Natural killer cell (primary cell): ENCODE measurements at regions of chr5 and their contacts with region 1.

Region 1: GRCh38 chr5:177311723-177312648 is at the start of gene MXD3:
- DNase-seq: peak; percentile 90 to 95
- ATAC-seq: peak; percentile 91 to 93 (median 92)
- H3K4me3 ChIP-seq: peak within 1 kb of the TSS; percentile 51
- H3K4me3 Mint-ChIP-seq: peak within 1 kb of the TSS; percentile 91
- H3K27ac ChIP-seq: no peak within 1 kb of the TSS
- H3K27ac Mint-ChIP-seq: peak within 1 kb of the TSS; percentile 68 to 87
- H3K4me1 ChIP-seq: peaks cover 61% of the 10 kb centered on the region
- H3K4me1 Mint-ChIP-seq: peaks cover 30 to 40% of the 10 kb centered on the region in 2 donors
- H3K27me3 ChIP-seq: no peaks in the 10 kb centered on the region
- H3K27me3 Mint-ChIP-seq: no peaks in the 10 kb centered on the region
- CTCF ChIP-seq: no peak
- total RNA-seq, gene MXD3: 10.9 to 15.0 (median 15.0) TPM

Region 2: DNA sequence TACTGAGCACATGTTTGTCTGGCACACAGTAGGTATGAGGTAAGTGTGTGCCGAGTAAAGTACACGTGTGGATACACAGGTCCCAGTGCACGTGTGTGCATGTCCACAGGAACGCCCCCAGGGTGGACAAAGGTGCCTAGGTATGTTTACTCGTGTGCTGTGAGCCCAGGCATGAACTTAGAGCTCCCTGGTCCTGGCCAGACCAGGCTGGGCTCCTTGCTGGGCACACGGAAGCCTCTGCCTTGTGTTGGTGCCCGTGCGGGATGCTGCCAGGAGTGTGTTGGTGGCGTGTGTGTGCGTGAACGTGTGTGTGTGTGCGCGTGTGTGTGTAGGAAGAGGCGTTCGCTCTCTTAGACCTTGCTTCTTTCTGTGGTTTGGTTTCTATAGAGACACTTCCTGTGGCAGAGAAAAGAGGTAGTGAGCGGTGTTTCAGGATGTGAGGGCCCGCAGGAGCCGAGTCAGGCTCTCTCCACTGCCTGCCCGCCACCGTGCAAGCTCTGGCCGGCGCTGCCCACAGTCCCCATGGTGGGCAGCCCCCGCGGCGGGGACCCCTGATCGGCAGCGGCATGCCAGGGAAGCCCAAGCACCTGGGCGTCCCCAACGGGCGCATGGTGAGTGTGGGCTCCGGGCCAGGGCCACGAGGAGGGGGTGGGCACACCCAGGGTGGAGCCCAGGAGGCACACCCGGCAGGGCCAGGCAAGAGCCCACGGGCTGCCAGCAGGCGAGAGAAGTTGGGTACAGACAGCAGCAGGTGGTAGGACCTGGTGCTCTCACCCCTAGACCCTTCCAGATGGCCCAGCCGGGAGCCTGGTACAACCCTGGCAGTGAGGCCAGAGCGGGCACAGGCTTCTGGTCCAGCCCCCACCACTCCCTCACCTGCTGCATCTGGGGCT is 45.7 kb after region 1 on chr5 and contains the start of gene RGS14:
- intact Hi-C with region 1: loop called (anchors 5 kb)
- DNase-seq: peak; percentile 55 to 90
- ATAC-seq: peak; percentile 92 to 95 (median 95)
- H3K4me3 ChIP-seq: peak within 1 kb of the TSS; percentile 85
- H3K4me3 Mint-ChIP-seq: peak within 1 kb of the TSS; percentile 90
- H3K27ac ChIP-seq: peak within 1 kb of the TSS; percentile 51
- H3K27ac Mint-ChIP-seq: peak within 1 kb of the TSS; percentile 88 to 89
- H3K4me1 ChIP-seq: peaks cover 73% of the 10 kb centered on the region
- H3K4me1 Mint-ChIP-seq: peaks cover 64 to 72% of the 10 kb centered on the region in 2 donors
- H3K27me3 ChIP-seq: no peaks in the 10 kb centered on the region
- H3K27me3 Mint-ChIP-seq: no peaks in the 10 kb centered on the region
- CTCF ChIP-seq: no peak
- total RNA-seq, gene RGS14: 57.3 to 87.0 (median 66.1) TPM